Left cardiac atrium (tissue), 4 donors: ENCODE measurements at regions of chr1 and their contacts with region 1.

Region 1: GRCh38 chr1:85307987-85308832 is 31.8 kb upstream of the BCL10 start:
- DNase-seq: peak; percentile 91
- ATAC-seq: peak; percentile 97 to 98

Region 2: GRCh38 chr1:85374160-85374559 is 66.0 kb after region 1 on chr1:
- intact Hi-C with region 1: no loop called
- DNase-seq: no peak
- ATAC-seq: peak; percentile 74 to 93

Region 3: GRCh38 chr1:85398391-85399064 is 90.3 kb after region 1 on chr1:
- intact Hi-C with region 1: loop called (anchors 2 to 5 kb)
- DNase-seq: no peak
- ATAC-seq: peak; percentile 26 to 62

Region 4: GRCh38 chr1:85502625-85503083 is 194.4 kb after region 1 on chr1:
- intact Hi-C with region 1: loop called (anchors 1 to 5 kb)
- DNase-seq: peak; percentile 37
- ATAC-seq: peak; percentile 75 to 93

Region 5: DNA sequence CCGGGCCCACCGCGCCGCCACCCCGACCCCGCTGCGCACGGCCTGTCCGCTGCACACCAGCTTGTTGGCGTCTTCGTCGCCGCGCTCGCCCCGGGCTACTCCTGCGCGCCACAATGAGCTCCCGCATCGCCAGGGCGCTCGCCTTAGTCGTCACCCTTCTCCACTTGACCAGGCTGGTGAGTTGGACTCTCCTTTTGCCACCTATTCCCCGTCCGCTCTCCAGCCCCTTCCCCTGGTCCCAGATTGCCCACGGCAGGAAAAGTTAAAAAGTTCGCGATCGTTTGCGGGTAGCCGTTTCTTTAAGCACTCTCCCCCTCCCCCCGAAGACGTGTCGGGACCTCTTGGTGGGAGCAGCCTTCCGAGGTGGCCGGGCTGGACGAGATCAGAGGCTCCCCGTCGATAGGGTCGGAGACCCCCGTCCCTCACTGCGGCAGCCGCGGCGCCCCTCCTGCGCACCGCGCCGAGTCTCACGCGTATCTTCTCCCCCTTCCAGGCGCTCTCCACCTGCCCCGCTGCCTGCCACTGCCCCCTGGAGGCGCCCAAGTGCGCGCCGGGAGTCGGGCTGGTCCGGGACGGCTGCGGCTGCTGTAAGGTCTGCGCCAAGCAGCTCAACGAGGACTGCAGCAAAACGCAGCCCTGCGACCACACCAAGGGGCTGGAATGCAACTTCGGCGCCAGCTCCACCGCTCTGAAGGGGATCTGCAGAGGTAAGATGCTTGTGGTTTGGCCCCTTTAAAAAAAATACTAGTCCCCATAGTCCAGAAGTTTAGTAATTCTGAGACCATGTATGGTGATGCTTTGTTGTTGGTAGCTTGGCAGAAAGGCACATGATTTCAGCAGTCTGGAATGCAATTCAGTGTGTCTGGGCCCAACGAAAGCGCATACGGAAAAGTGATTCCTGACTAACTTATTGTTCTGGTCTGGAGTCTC is 272.9 kb after region 1 on chr1:
- intact Hi-C with region 1: loop called (anchors 5 to 10 kb)
- DNase-seq: peak; percentile 74
- ATAC-seq: peak; percentile 48 to 56

Region 6: DNA sequence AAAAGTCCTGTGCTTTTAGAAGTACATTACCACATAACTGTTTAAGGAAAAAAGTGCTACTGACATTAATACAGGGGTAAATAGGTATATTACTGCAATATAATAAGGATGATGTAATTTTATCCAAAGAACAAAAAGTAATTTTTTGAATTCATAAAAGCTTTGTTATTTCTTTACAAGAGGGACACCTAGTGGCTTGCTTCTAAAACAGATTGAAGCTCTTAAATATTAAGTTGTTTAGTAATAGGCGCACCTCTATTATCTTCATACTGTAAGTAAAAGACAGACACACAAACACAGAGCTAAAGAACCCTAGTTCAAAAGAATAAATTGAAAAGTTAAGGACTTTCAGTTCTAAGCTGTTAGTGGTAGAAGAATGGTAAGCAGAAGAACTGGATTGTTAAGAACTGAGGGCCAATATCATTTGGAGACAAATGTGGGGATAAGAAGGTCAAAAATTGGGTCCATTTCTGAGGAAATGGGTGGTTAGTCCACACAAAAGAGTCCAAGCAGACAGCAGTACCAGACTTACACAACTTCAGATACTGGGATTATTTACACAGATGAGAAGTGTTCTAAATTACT is 384.6 kb after region 1 on chr1:
- intact Hi-C with region 1: loop called (anchors 2 to 5 kb)
- DNase-seq: no peak
- ATAC-seq: no peak

Region 7: DNA sequence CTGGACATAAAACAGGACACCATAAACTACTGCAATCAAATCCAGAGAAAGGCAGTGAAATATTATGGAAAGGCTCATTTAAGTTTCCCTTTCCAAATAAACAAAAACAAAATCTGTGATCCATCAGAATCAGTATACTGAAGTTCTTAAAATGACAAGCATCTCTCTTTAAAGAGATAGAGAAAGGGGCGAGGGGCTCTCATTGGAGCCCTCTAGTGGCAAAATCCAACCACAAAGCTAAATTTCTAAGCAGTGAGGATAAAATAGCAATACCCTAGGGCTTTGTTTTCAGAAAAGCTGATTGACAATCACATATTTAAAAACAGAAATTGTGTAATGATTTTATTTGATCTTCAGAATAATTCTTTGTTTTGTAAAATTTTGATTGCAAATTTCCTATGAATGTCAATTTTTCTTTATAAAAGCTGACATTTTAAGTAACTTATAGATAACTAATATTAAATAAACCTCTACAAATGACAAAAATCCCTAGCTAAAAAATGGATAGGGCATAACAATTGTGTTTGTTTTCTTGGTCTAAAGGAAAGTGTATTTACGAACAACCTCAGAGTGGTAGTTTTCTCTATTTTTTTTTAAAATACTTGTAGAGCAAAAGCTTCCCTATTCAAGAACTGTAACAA is 710.2 kb after region 1 on chr1:
- intact Hi-C with region 1: loop called in 1 of 2 experiments (anchors 10 kb)
- DNase-seq: no peak
- ATAC-seq: no peak